B cell (primary cell): ENCODE measurements at regions of chr19 and their contacts with region 1.

Region 1: DNA sequence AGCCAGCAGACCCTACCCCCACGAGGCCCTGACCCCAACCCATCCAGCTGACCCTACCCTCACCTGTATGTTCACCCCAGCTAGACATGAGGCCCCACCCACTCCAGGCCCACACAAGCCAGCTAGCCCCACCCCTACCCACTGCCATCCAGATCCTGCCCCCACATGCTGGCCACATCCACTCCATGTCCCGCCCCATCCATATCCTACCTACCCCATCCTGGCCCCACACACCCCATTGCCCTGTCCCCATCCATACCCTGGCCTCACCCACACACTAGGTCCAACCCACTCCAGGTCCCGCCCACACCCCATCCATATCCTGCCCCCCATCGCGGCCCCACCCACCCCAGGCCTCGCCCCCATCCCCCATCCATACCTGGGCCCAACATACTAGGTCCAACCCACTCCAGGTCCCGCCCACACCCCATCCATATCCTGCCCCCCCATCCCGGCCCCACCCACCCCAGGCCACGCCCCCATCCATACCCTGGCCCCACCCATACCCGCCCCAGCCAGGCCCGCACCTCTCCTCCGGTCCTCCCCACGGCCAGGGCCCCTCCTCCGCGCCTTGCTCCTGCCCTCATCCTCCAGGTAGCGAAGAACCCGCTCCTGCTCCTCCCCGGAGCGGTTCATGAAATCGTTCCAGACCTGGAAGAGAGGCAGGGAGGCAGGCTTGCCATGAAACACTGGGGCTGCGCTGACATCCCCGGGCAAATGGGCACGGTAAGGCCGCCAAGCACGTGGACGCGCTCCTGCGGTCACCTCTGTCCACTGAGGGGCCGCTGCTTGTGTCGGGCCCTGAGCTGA is 7.2 kb downstream of the RNU6-9 start:
- DNase-seq: peak; percentile 23
- ATAC-seq: peak; percentile 8
- H3K4me3 ChIP-seq: no peak overlapping the region
- H3K4me3 Mint-ChIP-seq: no peak overlapping the region
- H3K27ac ChIP-seq: peak overlapping the region in 1 of 2 donors; percentile 43
- H3K27ac Mint-ChIP-seq: no peak overlapping the region
- H3K4me1 ChIP-seq: peaks cover under 1 to 14% of the 10 kb centered on the region in 2 donors
- H3K4me1 Mint-ChIP-seq: peaks cover 26% of the 10 kb centered on the region
- H3K27me3 ChIP-seq: no peaks in the 10 kb centered on the region
- H3K27me3 Mint-ChIP-seq: no peaks in the 10 kb centered on the region
- CTCF ChIP-seq: no peak

Region 2: GRCh38 chr19:584240-585001 is 316.1 kb before region 1 on chr19:
- CTCF ChIA-PET with region 1: no interaction called
- POLR2A ChIA-PET with region 1: no interaction called
- intact Hi-C with region 1: no loop called
- DNase-seq: peak; percentile 77
- ATAC-seq: peak; percentile 76
- H3K4me3 ChIP-seq: no peak overlapping the region
- H3K4me3 Mint-ChIP-seq: no peak overlapping the region
- H3K27ac ChIP-seq: no peak overlapping the region
- H3K27ac Mint-ChIP-seq: no peak overlapping the region
- H3K4me1 ChIP-seq: peaks cover 14 to 17% of the 10 kb centered on the region in 2 donors
- H3K4me1 Mint-ChIP-seq: peaks cover 9% of the 10 kb centered on the region
- H3K27me3 ChIP-seq: peaks cover 0 to 37% (median 13%) of the 10 kb centered on the region in 4 experiments
- H3K27me3 Mint-ChIP-seq: peaks cover 12% of the 10 kb centered on the region
- CTCF ChIP-seq: peak; percentile 88

Region 3: GRCh38 chr19:662962-663681 is 237.4 kb before region 1 on chr19 and contains the start of gene RNF126:
- CTCF ChIA-PET with region 1: no interaction called
- POLR2A ChIA-PET with region 1: no interaction called
- intact Hi-C with region 1: no loop called
- DNase-seq: peak; percentile 94
- ATAC-seq: peak; percentile 71
- H3K4me3 ChIP-seq: peak within 1 kb of the TSS; percentile 65 to 94 (median 82)
- H3K4me3 Mint-ChIP-seq: peak within 1 kb of the TSS; percentile 96
- H3K27ac ChIP-seq: peak within 1 kb of the TSS; percentile 87 to 97
- H3K27ac Mint-ChIP-seq: peak within 1 kb of the TSS; percentile 98
- H3K4me1 ChIP-seq: peaks cover 31 to 60% of the 10 kb centered on the region in 2 donors
- H3K4me1 Mint-ChIP-seq: peaks cover 45% of the 10 kb centered on the region
- H3K27me3 ChIP-seq: no peaks in the 10 kb centered on the region
- H3K27me3 Mint-ChIP-seq: no peaks in the 10 kb centered on the region
- CTCF ChIP-seq: no peak
- total RNA-seq, gene RNF126: 74.3 and 88.8 TPM in 2 replicates

Region 4: GRCh38 chr19:1260636-1261537 is 360.4 kb after region 1 on chr19:
- CTCF ChIA-PET with region 1: no interaction called
- POLR2A ChIA-PET with region 1: interaction called, 12 read pairs
- intact Hi-C with region 1: loop called (anchors 5 kb)
- DNase-seq: peak; percentile 98
- ATAC-seq: peak; percentile 59
- H3K4me3 ChIP-seq: peak overlapping the region; percentile 61 to 95 (median 81)
- H3K4me3 Mint-ChIP-seq: peak overlapping the region; percentile 97
- H3K27ac ChIP-seq: peak overlapping the region; percentile 99 to 100
- H3K27ac Mint-ChIP-seq: peak overlapping the region; percentile 99
- H3K4me1 ChIP-seq: peaks cover 68 to 91% of the 10 kb centered on the region in 2 donors
- H3K4me1 Mint-ChIP-seq: peaks cover 78% of the 10 kb centered on the region
- H3K27me3 ChIP-seq: no peaks in the 10 kb centered on the region
- H3K27me3 Mint-ChIP-seq: no peaks in the 10 kb centered on the region
- CTCF ChIP-seq: no peak

Region 5: GRCh38 chr19:1819341-1820275 is 919.1 kb after region 1 on chr19:
- CTCF ChIA-PET with region 1: no interaction called
- POLR2A ChIA-PET with region 1: interaction called, 12 read pairs
- intact Hi-C with region 1: no loop called
- DNase-seq: no peak
- ATAC-seq: no peak
- H3K4me3 ChIP-seq: no peak overlapping the region
- H3K4me3 Mint-ChIP-seq: no peak overlapping the region
- H3K27ac ChIP-seq: no peak overlapping the region
- H3K27ac Mint-ChIP-seq: no peak overlapping the region
- H3K4me1 ChIP-seq: no peaks in the 10 kb centered on the region
- H3K4me1 Mint-ChIP-seq: no peaks in the 10 kb centered on the region
- H3K27me3 ChIP-seq: no peaks in the 10 kb centered on the region
- H3K27me3 Mint-ChIP-seq: no peaks in the 10 kb centered on the region
- CTCF ChIP-seq: no peak